ENCODE measurements at regions of chr15 and their contacts with region 1.

Region 1: DNA sequence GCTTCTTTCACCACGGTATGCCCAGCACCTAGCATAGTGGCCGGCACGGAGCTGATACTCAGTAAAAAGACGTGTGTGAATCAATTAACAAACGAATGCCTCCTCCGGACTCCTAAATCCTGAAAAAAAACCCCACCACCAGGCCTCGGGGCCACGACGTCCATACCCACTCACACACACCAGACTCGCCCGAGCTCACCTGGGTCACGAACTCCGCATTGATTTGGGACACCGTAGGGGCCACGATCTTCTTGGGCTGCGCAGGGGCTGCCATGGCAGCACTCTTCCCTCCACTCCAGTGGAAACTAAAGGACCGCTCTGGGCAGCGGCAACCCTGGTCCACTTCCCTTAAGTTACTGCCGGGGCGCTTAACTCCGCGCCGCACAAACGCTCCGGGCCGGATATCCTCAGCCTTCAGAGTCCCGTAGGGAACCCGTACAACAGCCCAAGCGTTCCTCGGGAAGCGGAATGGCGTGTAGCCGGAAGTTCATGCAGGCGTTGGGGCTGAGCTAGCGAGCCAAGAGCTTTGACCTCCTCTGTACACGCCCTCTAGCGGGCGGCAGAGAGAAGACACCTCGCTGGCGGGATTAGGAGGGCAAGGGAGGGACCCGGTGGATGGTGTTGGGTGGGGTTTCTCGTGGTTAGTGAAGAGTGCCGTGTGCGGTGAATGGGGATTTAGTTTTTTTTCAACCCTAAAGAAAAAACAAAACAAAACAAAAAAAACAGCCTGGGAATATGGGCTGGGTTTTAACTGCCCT is at the start of gene AQR:
- DNase-seq: peak; percentile 98
- H3K4me3 ChIP-seq: peak within 1 kb of the TSS; percentile 56 to 98 (median 95)
- H3K27ac ChIP-seq: peak within 1 kb of the TSS; percentile 46
- H3K4me1 ChIP-seq: peaks cover 11% of the 10 kb centered on the region
- H3K27me3 ChIP-seq: no peaks in the 10 kb centered on the region
- CTCF ChIP-seq: peak; percentile 68 to 93
- POLR2A ChIP-seq: peak; percentile 83
- total RNA-seq, gene AQR: 37.5 and 37.7 TPM in 2 replicates

Region 2: GRCh38 chr15:34942363-34942762 is 27.2 kb before region 1 on chr15:
- CTCF ChIA-PET with region 1: interaction called, 11 read pairs
- POLR2A ChIA-PET with region 1: no interaction called
- dilution Hi-C with region 1: no loop called
- intact Hi-C with region 1: no loop called
- DNase-seq: peak; percentile 64
- H3K4me3 ChIP-seq: no peak overlapping the region
- H3K27ac ChIP-seq: no peak overlapping the region
- H3K4me1 ChIP-seq: peaks cover 5% of the 10 kb centered on the region
- H3K27me3 ChIP-seq: no peaks in the 10 kb centered on the region
- CTCF ChIP-seq: no peak
- POLR2A ChIP-seq: no peak

Region 3: DNA sequence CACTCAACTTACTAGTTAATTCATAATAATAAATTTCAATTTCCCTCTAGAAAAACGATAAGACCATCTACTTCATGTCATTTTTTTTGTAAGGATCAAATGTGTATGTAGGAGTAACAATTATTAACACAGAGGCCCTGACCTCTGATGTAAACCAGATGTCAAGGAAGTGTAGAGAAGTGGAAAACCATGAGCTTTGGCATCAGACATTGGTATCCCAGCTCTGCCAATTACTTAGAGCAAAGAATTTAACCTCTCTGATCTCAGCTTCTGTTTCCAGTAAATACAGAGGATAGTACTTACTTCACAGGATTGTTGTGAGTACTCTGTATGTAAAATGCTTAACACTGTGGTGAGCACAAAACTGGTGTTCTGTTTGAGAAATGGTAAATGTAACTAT is 17.5 kb before region 1 on chr15:
- CTCF ChIA-PET with region 1: interaction called, 17 read pairs
- POLR2A ChIA-PET with region 1: interaction called, 4 read pairs
- dilution Hi-C with region 1: no loop called
- intact Hi-C with region 1: no loop called
- DNase-seq: peak; percentile 83
- H3K4me3 ChIP-seq: no peak overlapping the region
- H3K27ac ChIP-seq: no peak overlapping the region
- H3K4me1 ChIP-seq: no peaks in the 10 kb centered on the region
- H3K27me3 ChIP-seq: no peaks in the 10 kb centered on the region
- CTCF ChIP-seq: no peak
- POLR2A ChIP-seq: no peak

Region 4: DNA sequence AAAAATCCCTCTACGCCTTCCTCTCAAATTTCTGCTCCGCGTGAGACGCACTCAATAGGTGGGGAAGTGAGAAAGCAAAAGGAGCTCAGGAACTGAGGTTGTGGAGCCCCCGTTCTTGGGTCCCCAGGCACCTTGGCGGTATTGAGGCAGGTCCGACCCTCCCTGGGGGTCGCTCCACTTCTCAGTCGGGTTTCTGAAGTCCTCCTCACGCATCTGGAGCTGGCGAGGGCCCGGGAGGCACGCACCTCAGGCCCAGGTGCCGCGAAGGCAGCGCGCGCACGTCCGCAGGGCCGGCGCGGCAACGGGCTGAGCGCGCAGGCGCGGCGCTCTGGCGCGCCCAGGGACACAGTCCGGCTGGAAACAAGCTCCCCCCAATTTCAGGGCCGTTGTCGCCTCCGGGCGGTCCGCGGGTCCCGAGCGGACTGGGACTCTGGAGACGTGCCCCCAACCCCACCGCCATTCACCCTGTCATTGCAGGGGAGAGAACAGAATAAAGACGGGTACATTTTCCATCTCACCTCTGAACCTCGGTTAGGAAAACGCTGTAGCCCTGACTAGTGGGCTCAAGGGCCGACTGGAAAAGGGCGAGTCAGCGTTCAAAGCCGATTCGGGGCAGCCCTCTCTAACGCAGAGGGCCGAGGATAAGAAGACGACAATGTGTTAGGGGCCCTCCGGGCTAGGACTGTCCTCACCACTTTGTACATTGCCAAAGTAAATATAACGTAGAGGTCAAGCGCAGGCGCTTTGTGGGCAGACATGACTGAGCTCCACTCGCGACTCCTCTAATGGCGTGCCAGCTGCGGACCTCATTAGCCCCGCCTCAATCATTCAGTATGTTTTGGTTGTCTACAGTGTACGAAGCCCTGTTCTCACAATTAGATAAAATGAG is 18.7 kb after region 1 on chr15 and contains the start of gene ZNF770:
- CTCF ChIA-PET with region 1: interaction called, 82 read pairs
- POLR2A ChIA-PET with region 1: interaction called, 30 read pairs
- dilution Hi-C with region 1: no loop called
- intact Hi-C with region 1: loop called (anchors 1 kb)
- DNase-seq: peak; percentile 82
- H3K4me3 ChIP-seq: peak within 1 kb of the TSS; percentile 70 to 95 (median 85)
- H3K27ac ChIP-seq: peak within 1 kb of the TSS; percentile 90
- H3K4me1 ChIP-seq: peaks cover 32% of the 10 kb centered on the region
- H3K27me3 ChIP-seq: peaks cover 0 to 4% of the 10 kb centered on the region in 2 experiments
- CTCF ChIP-seq: no peak
- POLR2A ChIP-seq: peak; percentile 93
- total RNA-seq, gene ZNF770: 29.3 and 30.3 TPM in 2 replicates

Measured in endothelial cell of umbilical vein (primary cell).